ENCODE measurements at regions of chr4 and their contacts with region 1.

Region 1: DNA sequence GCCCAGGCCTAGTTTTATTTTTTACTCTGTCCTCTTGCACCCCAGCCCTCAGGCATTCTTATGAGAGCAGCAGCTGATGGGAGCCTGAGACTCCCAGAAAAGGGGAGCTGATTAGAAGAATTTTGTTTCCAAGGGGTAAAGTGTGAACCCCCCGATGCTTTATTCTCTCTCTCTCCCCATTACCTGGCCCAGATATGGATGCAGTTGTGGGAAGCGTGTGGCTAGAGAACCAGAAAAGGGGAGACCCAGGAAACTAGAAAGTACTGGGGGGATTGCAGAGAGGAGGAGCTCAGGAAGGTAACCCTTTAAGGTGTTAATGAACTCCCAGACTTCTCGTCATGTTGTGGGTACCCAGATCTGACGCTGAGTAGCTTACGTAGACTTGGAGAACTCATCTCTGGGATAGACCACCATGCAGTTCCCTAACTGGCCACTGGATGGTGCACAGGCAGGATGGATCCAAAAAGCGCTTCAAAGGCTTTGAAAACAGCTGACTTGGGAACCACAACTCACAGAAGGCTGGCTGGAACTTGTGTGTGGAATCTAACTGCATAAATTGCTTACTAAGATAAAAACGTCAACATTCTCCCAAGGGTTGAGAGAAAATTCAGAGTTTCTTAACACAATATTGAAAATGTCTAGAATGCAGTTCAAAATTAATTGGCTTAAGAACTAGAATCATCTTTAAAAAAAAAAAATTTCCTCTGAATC is 64.7 kb downstream of the TBC1D14 start:
- DNase-seq: peak; percentile 88 to 93
- ATAC-seq: peak; percentile 94
- H3K4me3 ChIP-seq: no peak overlapping the region
- H3K27ac ChIP-seq: no peak overlapping the region
- H3K4me1 ChIP-seq: no peaks in the 10 kb centered on the region
- H3K27me3 ChIP-seq: no peaks in the 10 kb centered on the region

Region 2: DNA sequence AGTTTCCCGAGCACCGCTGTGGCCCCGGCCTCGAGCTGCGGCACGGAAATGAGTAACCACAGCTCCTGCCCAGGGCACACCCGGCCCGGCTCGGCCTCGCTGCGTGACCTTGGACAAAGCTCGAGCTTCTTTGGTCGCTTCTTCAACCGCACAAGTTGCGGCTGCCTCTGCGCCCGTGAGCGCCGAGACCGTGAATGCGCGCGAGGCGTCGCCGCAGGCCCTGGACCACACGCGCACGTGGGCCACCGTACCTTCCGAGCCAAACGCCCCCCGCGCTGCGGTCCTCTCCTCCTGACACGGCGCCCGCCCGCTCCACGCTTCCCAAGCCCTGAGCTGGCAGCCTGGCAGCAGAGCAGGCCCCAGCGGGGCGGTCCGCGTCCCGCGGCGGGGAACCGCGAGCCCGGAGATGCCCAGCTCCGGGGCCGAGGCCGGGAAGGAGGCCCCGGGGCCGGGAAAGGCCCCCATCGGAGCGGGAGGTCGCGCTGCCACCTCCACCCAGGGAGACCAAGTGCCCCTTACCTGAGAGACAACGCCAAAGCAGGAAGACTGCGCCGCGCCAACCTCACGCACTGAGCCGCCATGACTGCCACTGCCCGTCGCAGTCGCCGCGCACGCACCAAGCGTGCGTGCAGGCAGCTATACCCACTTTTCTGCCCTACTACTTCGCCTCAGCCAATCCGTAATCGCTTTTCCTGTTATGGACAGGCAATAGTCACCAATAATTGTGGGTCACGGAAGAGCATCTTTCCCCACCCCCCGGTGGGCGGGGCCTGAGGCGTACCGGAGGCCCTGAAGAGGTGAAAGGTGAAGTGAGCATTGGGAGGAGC is 93.4 kb after region 1 on chr4 and contains the start of gene GRPEL1:
- intact Hi-C with region 1: loop called (anchors 1 to 5 kb)
- DNase-seq: peak; percentile 100
- ATAC-seq: peak; percentile 99
- H3K4me3 ChIP-seq: peak within 1 kb of the TSS; percentile 74 to 76
- H3K27ac ChIP-seq: peak within 1 kb of the TSS in 1 of 2 donors; percentile 80
- H3K4me1 ChIP-seq: peaks cover 0 to 6% of the 10 kb centered on the region in 2 donors
- H3K27me3 ChIP-seq: no peaks in the 10 kb centered on the region
- total RNA-seq, gene GRPEL1: 16.1 to 22.0 TPM

Region 3: GRCh38 chr4:7295197-7295910 is 321.1 kb after region 1 on chr4:
- intact Hi-C with region 1: no loop called
- DNase-seq: peak in 1 of 2 donors; percentile 77
- ATAC-seq: peak; percentile 16
- H3K4me3 ChIP-seq: no peak overlapping the region
- H3K27ac ChIP-seq: no peak overlapping the region
- H3K4me1 ChIP-seq: no peaks in the 10 kb centered on the region
- H3K27me3 ChIP-seq: no peaks in the 10 kb centered on the region

Region 4: GRCh38 chr4:7719354-7720174 is 745.3 kb after region 1 on chr4:
- intact Hi-C with region 1: loop called in 1 of 2 experiments (anchors 5 kb)
- DNase-seq: peak; percentile 75 to 90
- ATAC-seq: peak; percentile 48
- H3K4me3 ChIP-seq: no peak overlapping the region
- H3K27ac ChIP-seq: no peak overlapping the region
- H3K4me1 ChIP-seq: no peaks in the 10 kb centered on the region
- H3K27me3 ChIP-seq: no peaks in the 10 kb centered on the region

Measured in aorta (tissue), 5 donors.